Naive thymus-derived CD4-positive, alpha-beta T cell (primary cell): ENCODE measurements at regions of chr7 and their contacts with region 1.

Region 1: DNA sequence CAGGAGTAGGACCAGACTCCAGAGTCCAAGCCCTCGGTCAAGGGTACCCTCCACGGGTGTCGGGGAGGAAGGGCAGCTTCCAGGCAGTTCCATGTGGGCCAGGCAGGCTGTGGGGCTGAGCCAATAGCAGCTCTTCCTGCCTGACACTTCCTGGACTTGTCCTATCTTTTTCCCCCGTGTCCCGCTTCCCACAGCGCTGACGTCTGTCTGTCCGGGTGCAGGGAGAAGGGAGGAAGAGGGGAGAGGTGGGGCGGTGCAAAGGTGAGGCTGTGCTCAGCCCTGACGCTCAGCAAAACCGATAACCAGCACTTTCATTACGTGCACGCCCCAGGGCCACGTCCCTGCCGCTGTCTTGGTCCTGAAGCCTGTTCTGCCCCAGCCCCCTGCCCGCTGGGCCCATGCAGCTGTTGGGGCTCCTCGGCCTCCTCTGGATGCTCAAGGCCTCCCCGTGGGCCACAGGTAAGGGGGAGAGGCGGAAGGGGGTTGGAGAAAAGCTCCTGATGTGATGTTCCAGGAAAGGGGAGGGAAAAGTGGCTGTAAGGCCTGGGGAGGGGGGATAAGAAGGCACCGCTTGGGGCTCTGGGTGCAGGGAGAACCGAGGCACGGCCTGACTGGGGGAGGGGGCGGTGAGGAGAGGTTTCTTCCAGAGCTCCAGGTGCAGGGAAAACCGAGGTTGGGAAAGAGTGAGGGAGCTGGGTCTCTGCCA is at the start of gene MUC3A:
- DNase-seq: no peak
- ATAC-seq: no peak
- H3K4me3 ChIP-seq: no peak within 1 kb of the TSS
- H3K4me3 Mint-ChIP-seq: no peak within 1 kb of the TSS
- H3K27ac ChIP-seq: no peak within 1 kb of the TSS
- H3K27ac Mint-ChIP-seq: no peak within 1 kb of the TSS
- H3K4me1 ChIP-seq: no peaks in the 10 kb centered on the region
- H3K4me1 Mint-ChIP-seq: peaks cover 0 to 6% (median 0%) of the 10 kb centered on the region in 7 donors
- H3K27me3 ChIP-seq: no peaks in the 10 kb centered on the region
- H3K27me3 Mint-ChIP-seq: peaks cover 12 to 35% (median 15%) of the 10 kb centered on the region in 5 donors
- total RNA-seq, gene MUC3A: not detected

Region 2: DNA sequence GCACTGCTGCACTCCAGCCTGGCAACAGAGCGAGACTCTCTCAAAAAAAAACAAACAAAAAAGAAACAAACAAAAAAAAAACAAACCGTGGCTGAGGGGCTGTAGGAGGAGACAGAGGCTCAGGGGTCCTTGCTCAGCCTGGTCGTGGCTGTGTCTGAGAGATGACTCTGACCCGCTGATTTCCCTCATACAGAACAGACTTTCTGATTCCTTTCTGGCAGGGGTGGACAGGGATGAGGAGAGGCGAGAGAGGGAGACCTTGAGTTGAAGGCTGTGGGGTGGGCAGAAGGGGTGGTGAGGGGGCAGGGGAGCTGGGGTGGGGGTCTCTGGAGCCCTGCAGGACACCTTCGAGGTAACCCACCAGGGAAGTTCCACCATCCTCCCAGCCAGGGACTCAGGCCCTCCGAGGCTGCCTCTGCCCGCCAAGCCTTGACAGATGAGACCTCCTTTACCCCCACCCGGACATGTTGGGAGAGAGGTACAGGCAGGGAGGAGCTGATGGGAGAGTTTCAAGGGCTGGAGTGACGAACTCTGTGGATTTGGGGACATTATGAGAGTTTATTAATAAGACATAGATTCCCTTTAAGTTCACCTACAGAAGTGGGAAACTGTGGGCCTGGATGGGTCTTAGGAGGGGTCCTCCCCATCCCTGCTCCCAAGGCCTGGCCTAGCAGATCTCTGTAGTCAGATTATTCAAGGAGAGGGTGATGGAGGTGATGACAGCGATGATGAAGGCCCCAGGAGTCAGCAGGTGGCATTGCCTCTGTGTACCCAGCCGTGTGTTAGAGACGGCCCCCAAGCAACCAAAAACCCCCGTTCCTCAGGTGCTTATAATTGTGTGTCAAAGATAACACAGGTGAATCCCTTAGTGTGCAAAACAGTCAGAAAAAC is 22.0 kb after region 1 on chr7:
- CTCF ChIA-PET with region 1: no interaction called
- POLR2A ChIA-PET with region 1: no interaction called
- intact Hi-C with region 1: loop called in 1 of 2 experiments (anchors 2 kb)
- DNase-seq: no peak
- ATAC-seq: no peak
- H3K4me3 ChIP-seq: no peak overlapping the region
- H3K4me3 Mint-ChIP-seq: no peak overlapping the region
- H3K27ac ChIP-seq: no peak overlapping the region
- H3K27ac Mint-ChIP-seq: no peak overlapping the region
- H3K4me1 ChIP-seq: peaks cover 0 to 5% of the 10 kb centered on the region in 2 donors
- H3K4me1 Mint-ChIP-seq: peaks cover 3 to 13% (median 8%) of the 10 kb centered on the region in 7 donors
- H3K27me3 ChIP-seq: peaks cover 0 to 13% of the 10 kb centered on the region in 2 donors
- H3K27me3 Mint-ChIP-seq: peaks cover 31 to 47% (median 43%) of the 10 kb centered on the region in 5 donors